ENCODE measurements at regions of chr2 and their contacts with region 1.

Region 1: DNA sequence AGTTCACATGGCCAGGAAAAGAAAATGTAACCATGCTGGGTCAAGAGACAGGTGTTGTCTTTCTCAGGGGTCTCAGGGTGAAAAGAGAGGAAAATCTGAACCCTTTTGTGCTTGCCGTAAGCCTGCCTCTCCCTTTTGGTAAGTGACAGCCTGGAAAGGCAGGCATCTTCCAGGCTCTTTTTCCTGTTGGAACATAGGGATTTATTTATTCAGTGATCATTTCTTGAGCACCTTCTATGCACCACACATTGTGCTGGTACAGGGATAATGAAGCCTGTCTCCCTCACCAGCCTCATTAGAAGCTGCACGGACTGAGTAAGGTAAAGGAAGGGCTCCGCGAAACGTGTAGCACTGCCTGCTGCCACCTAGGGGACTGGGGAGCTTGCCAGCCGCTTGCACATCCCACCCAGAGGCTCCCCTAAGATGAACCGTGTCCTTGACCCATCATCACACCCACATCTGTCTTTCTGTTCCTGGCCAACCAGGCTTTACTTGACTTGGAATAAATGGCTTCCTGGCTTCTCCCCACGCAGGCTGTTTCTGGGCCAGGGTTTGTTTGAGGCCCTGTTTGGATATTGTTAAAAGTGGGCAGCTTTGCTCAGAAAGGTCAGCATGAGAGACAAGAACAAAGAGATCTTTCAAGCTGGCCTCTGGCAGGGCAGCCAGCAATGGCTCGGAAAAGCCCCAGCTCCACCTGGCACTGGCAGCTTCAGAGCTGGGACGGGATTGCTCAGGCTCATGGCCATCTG is 73.3 kb upstream of the MCFD2 start:
- DNase-seq: peak; percentile 88
- ATAC-seq: peak; percentile 65
- H3K4me3 ChIP-seq: no peak overlapping the region
- H3K27ac ChIP-seq: peak overlapping the region; percentile 62
- H3K4me1 ChIP-seq: peaks cover 36% of the 10 kb centered on the region
- H3K27me3 ChIP-seq: no peaks in the 10 kb centered on the region
- CTCF ChIP-seq: peak; percentile 73
- EP300 ChIP-seq: no peak
- POLR2A ChIP-seq: no peak
- RAD21 ChIP-seq: no peak

Region 2: GRCh38 chr2:46873375-46874032 is 115.4 kb before region 1 on chr2:
- CTCF ChIA-PET with region 1: no interaction called
- POLR2A ChIA-PET with region 1: no interaction called
- in situ Hi-C with region 1: no loop called
- intact Hi-C with region 1: no loop called
- DNase-seq: peak; percentile 42
- ATAC-seq: peak; percentile 25; the same call in 1 of the 3 replicates
- H3K4me3 ChIP-seq: no peak overlapping the region
- H3K27ac ChIP-seq: no peak overlapping the region
- H3K4me1 ChIP-seq: peaks cover 46% of the 10 kb centered on the region
- H3K27me3 ChIP-seq: peaks cover 5 to 19% of the 10 kb centered on the region in 2 experiments; a peak in 4 of 5 replicates
- CTCF ChIP-seq: no peak
- EP300 ChIP-seq: no peak
- POLR2A ChIP-seq: no peak
- RAD21 ChIP-seq: no peak

Region 3: GRCh38 chr2:46924608-46925007 is 64.3 kb before region 1 on chr2:
- CTCF ChIA-PET with region 1: no interaction called
- POLR2A ChIA-PET with region 1: no interaction called
- in situ Hi-C with region 1: no loop called
- intact Hi-C with region 1: no loop called
- DNase-seq: no peak
- ATAC-seq: no peak
- H3K4me3 ChIP-seq: no peak overlapping the region
- H3K27ac ChIP-seq: no peak overlapping the region
- H3K4me1 ChIP-seq: peaks cover 16% of the 10 kb centered on the region
- H3K27me3 ChIP-seq: no peaks in the 10 kb centered on the region
- CTCF ChIP-seq: no peak
- EP300 ChIP-seq: no peak
- POLR2A ChIP-seq: no peak
- RAD21 ChIP-seq: no peak

Region 4: DNA sequence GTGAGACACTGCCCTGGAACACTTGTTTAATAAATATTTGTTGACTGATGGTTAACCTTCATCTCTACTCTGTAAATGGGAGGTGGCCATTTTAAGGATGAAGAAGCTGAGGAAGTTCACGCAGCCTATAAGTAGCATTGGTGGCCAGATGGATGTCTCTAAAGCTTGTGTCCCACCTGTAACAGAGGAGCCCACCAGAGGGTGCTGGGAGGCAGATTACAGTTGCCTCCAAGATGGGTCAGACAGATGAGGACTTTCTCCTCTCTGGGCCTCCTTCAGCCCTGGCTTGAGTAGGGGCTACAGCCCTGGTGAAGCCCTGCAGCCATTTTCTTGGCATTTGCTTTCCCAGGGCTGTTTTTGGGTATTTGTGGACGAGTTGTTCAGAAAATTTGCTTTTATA is 28.3 kb before region 1 on chr2:
- CTCF ChIA-PET with region 1: no interaction called
- POLR2A ChIA-PET with region 1: no interaction called
- in situ Hi-C with region 1: no loop called
- intact Hi-C with region 1: no loop called
- DNase-seq: no peak
- ATAC-seq: no peak
- H3K4me3 ChIP-seq: no peak overlapping the region
- H3K27ac ChIP-seq: no peak overlapping the region
- H3K4me1 ChIP-seq: peaks cover 40% of the 10 kb centered on the region
- H3K27me3 ChIP-seq: no peaks in the 10 kb centered on the region
- CTCF ChIP-seq: 0 out of 2 replicates have a peak, but pooled peaks have one; percentile 28
- EP300 ChIP-seq: no peak
- POLR2A ChIP-seq: no peak
- RAD21 ChIP-seq: no peak

Region 5: GRCh38 chr2:47174733-47175361 is 185.9 kb after region 1 on chr2:
- CTCF ChIA-PET with region 1: no interaction called
- POLR2A ChIA-PET with region 1: no interaction called
- in situ Hi-C with region 1: no loop called
- intact Hi-C with region 1: loop called (anchors 1 kb)
- DNase-seq: peak; percentile 49
- ATAC-seq: no peak
- H3K4me3 ChIP-seq: peak overlapping the region; percentile 89 to 99 (median 97)
- H3K27ac ChIP-seq: peak overlapping the region; percentile 66
- H3K4me1 ChIP-seq: peaks cover 57% of the 10 kb centered on the region
- H3K27me3 ChIP-seq: peaks cover 0 to 2% of the 10 kb centered on the region in 2 experiments; a peak in 1 of 5 replicates
- CTCF ChIP-seq: no peak
- EP300 ChIP-seq: no peak
- POLR2A ChIP-seq: peak in 1 of 2 experiments; percentile 74; a peak in 2 of 4 replicates
- RAD21 ChIP-seq: no peak

Region 6: GRCh38 chr2:47265751-47266231 is 276.9 kb after region 1 on chr2:
- CTCF ChIA-PET with region 1: no interaction called
- POLR2A ChIA-PET with region 1: no interaction called
- in situ Hi-C with region 1: no loop called
- intact Hi-C with region 1: loop called (anchors 2 kb)
- DNase-seq: no peak
- ATAC-seq: peak; percentile 39
- H3K4me3 ChIP-seq: no peak overlapping the region
- H3K27ac ChIP-seq: no peak overlapping the region
- H3K4me1 ChIP-seq: peaks cover 72% of the 10 kb centered on the region
- H3K27me3 ChIP-seq: 0 out of 5 replicates have a peak, but pooled peaks cover 0 to 2% of the 10 kb centered on the region in 2 experiments
- CTCF ChIP-seq: no peak
- EP300 ChIP-seq: no peak
- POLR2A ChIP-seq: no peak
- RAD21 ChIP-seq: no peak

Region 7: GRCh38 chr2:48272199-48272598 is 1283.3 kb after region 1 on chr2:
- CTCF ChIA-PET with region 1: no interaction called
- POLR2A ChIA-PET with region 1: no interaction called
- in situ Hi-C with region 1: no loop called
- intact Hi-C with region 1: no loop called
- DNase-seq: no peak
- ATAC-seq: no peak
- H3K4me3 ChIP-seq: no peak overlapping the region
- H3K27ac ChIP-seq: no peak overlapping the region
- H3K4me1 ChIP-seq: peaks cover 39% of the 10 kb centered on the region
- H3K27me3 ChIP-seq: no peaks in the 10 kb centered on the region; a peak in 1 of 5 replicates
- CTCF ChIP-seq: no peak
- EP300 ChIP-seq: no peak
- POLR2A ChIP-seq: no peak
- RAD21 ChIP-seq: no peak

Measured in HepG2 (cell line).